Mammary epithelial cell (primary cell): ENCODE measurements at regions of chr6 and their contacts with region 1.

Region 1: DNA sequence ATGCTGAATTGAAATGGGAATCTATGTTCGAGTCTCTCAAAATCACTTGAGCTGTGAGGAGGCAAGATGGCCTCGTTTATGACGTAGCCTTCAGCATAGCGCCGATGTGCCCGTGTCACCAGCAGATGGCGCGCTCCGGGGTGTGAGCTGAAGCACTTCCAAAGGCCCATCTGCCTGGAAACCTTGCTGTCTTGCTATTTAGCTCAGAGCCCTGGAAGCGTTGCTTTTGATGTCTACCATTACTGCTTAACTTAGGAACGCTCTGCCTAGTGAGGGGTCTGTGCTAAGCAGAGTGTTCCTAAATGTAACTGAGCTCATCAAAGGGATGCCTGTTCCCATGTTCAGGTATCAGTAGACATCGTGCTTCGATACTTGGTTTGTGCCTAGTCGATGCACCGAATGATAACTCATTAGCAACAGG is 67.7 kb downstream of the SYCP2L start:
- DNase-seq: peak; percentile 48
- H3K4me3 ChIP-seq: no peak overlapping the region
- H3K27ac ChIP-seq: no peak overlapping the region
- H3K4me1 ChIP-seq: no peaks in the 10 kb centered on the region
- H3K27me3 ChIP-seq: peaks cover 1% of the 10 kb centered on the region
- CTCF ChIP-seq: peak; percentile 93 to 98

Region 2: DNA sequence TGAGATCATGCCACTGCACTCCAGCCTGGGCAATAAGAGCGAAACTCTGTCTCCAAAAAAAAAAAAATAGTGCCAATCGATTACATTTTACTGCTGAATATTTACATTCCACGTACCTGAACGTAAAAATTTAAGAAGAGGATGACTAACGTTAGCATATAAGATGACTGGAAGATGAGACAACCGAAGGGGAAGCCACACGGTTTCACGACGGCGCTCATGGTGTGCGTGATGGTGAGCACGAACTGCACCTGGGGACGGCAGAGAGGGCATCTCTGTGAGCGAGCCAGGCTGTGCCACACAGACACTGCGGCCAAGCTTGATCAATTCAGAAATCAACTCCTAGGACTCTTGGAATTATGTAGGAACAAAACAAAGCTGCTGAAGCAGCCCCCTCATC is 35.0 kb after region 1 on chr6:
- CTCF ChIA-PET with region 1: no interaction called
- dilution Hi-C with region 1: loop called (anchors 5 kb)
- in situ Hi-C with region 1: no loop called
- intact Hi-C with region 1: no loop called
- DNase-seq: no peak
- H3K4me3 ChIP-seq: no peak overlapping the region
- H3K27ac ChIP-seq: no peak overlapping the region
- H3K4me1 ChIP-seq: no peaks in the 10 kb centered on the region
- H3K27me3 ChIP-seq: no peaks in the 10 kb centered on the region
- CTCF ChIP-seq: no peak

Region 3: DNA sequence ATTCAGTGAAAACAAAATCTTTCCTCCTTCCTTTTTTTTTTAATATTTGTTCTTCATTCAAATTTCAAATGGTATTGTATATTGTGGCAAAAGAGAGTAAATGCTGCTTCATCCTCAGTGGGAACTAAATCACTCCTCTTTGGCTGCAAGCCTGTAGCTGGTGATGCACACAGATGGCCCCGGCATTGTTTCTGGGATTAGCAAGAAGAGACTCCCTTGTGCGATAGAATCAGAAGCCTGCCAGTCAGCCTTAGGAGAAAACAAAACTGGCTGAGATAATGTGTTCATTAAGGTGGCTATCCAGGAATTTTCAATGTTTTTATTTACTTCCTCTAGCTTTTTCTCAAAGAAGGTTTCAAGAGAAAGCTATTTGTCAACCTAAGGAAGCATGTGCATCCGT is 110.2 kb after region 1 on chr6:
- CTCF ChIA-PET with region 1: interaction called, 16 read pairs
- dilution Hi-C with region 1: no loop called
- in situ Hi-C with region 1: loop called (anchors 5 kb)
- intact Hi-C with region 1: loop called (anchors 1 kb)
- DNase-seq: no peak
- H3K4me3 ChIP-seq: no peak overlapping the region
- H3K27ac ChIP-seq: no peak overlapping the region
- H3K4me1 ChIP-seq: no peaks in the 10 kb centered on the region
- H3K27me3 ChIP-seq: no peaks in the 10 kb centered on the region
- CTCF ChIP-seq: no peak

Region 4: GRCh38 chr6:11144393-11144851 is 189.8 kb after region 1 on chr6:
- CTCF ChIA-PET with region 1: no interaction called
- dilution Hi-C with region 1: no loop called
- in situ Hi-C with region 1: no loop called
- intact Hi-C with region 1: loop called (anchors 1 kb)
- DNase-seq: peak; percentile 70
- H3K4me3 ChIP-seq: no peak overlapping the region
- H3K27ac ChIP-seq: peak overlapping the region; percentile 79
- H3K4me1 ChIP-seq: peaks cover 46% of the 10 kb centered on the region
- H3K27me3 ChIP-seq: no peaks in the 10 kb centered on the region
- CTCF ChIP-seq: peak; percentile 94 to 96

Region 5: DNA sequence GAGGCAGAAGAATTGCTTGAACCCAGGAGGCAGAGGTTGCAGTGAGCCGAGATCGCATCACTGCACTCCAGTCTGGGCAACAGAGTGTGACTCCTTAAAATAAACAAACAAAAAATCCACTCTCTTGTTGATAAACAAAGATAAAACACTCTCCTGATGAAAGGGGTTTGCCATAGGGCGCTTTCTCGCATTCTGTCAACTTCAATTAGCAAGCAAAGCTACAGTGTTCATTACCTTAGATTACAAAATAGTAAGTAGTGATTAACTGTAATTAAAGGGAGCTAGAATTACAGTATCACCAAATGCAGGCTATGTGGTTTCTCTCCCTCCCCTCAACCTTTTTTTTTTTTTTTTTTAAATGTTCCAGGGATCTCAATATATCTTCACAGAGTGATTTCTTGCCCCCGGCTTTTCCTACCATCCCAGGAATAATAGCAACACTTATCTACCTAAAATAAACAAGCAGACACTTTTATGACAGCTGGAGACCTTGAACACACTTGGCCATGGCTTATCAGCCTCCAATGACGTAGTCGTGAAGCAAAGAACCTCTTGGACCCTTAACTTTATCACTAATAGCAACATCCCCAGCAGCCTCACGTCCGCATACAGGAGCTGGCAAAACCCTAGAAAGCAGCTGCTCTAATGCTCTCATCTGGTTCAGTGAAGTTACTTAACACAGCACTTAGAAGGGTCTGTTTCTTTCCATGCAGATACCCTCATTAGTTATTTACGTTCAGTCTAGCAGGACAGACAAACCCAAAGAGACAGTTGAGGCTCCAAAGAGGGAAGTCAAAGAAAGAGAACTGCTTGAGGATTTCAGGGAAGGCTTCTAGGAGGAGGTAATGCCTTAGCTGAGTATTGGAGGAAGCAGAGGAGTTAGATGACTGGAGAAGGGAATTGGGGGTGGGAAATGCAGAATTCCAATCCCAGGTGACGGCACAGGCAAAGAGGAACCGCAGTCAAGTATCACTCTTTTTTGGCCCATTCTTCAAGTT is 315.7 kb after region 1 on chr6:
- CTCF ChIA-PET with region 1: no interaction called
- dilution Hi-C with region 1: no loop called
- in situ Hi-C with region 1: no loop called
- intact Hi-C with region 1: no loop called
- DNase-seq: no peak
- H3K4me3 ChIP-seq: no peak overlapping the region
- H3K27ac ChIP-seq: no peak overlapping the region
- H3K4me1 ChIP-seq: no peaks in the 10 kb centered on the region
- H3K27me3 ChIP-seq: no peaks in the 10 kb centered on the region
- CTCF ChIP-seq: no peak

Region 6: GRCh38 chr6:11552442-11552841 is 597.8 kb after region 1 on chr6:
- CTCF ChIA-PET with region 1: no interaction called
- dilution Hi-C with region 1: no loop called
- in situ Hi-C with region 1: loop called in 1 of 2 experiments (anchors 25 kb)
- intact Hi-C with region 1: no loop called
- DNase-seq: no peak
- H3K4me3 ChIP-seq: no peak overlapping the region
- H3K27ac ChIP-seq: no peak overlapping the region
- H3K4me1 ChIP-seq: no peaks in the 10 kb centered on the region
- H3K27me3 ChIP-seq: peaks cover 2% of the 10 kb centered on the region
- CTCF ChIP-seq: no peak